ENCODE measurements at regions of chr12 and their contacts with region 1.

Region 1: GRCh38 chr12:48618541-48618940 is 48.7 kb upstream of the LALBA start:
- DNase-seq: peak; percentile 26
- H3K4me3 ChIP-seq: no peak overlapping the region
- H3K27ac ChIP-seq: no peak overlapping the region
- H3K27me3 ChIP-seq: peaks cover 5% of the 10 kb centered on the region
- CTCF ChIP-seq: peak; percentile 99

Region 2: GRCh38 chr12:48197971-48198671 is 420.4 kb before region 1 on chr12:
- CTCF ChIA-PET with region 1: interaction called, 29 read pairs
- POLR2A ChIA-PET with region 1: no interaction called
- DNase-seq: peak; percentile 65
- H3K4me3 ChIP-seq: peak overlapping the region; percentile 75
- H3K27ac ChIP-seq: peak overlapping the region; percentile 63
- H3K27me3 ChIP-seq: peaks cover 9% of the 10 kb centered on the region
- CTCF ChIP-seq: 0 out of 2 replicates have a peak, but pooled peaks have one; percentile 14

Region 3: DNA sequence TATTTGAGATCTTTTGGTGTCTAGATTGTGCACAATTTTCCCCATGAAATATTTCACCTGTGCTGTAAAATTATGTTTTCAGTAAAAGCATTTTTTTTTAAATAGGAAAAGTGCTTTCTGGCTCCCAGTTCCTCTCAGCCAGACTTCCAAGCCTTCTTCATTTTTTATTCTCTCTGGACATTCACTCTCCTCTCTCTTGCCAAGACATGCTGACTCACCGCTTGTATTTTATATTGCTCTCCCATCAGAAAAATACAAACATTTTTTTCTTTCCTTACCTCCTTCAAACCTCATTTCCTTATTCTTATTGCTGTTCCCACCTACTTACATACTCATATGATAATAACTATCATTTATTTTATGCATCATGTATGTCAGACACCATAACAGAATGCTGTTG is 230.1 kb before region 1 on chr12:
- CTCF ChIA-PET with region 1: no interaction called
- POLR2A ChIA-PET with region 1: no interaction called
- DNase-seq: no peak
- H3K4me3 ChIP-seq: no peak overlapping the region
- H3K27ac ChIP-seq: no peak overlapping the region
- H3K27me3 ChIP-seq: no peaks in the 10 kb centered on the region
- CTCF ChIP-seq: no peak

Region 4: DNA sequence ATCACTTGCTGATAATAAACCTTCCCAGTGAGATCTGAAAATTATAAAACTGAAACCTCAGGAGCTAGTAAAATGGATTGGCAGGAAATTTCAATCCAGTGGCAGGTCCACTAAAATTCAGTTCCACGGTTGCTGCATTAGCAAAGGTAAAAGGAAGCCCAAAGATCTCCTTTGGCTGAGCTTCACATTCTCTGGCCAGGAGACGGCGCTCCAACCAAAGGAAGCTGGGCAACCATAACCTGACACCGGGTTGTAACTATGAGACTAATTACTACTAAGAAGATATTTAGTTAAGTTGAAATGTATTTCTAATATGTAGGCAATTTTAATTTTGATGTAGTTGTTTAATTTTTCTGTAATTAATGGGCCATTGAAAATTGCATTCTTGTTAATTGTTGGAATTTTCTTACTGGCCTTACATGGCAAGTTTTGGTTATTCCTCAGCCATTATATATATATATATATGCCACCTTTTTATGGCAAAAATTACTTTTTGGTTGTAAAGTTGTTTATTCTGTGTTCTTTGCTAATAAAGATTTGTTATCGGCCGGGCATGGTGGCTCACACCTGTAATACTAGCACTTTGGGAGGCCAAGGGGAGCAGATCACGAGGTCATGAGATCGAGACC is 76.1 kb before region 1 on chr12:
- CTCF ChIA-PET with region 1: interaction called, 159 read pairs
- POLR2A ChIA-PET with region 1: no interaction called
- DNase-seq: no peak
- H3K4me3 ChIP-seq: no peak overlapping the region
- H3K27ac ChIP-seq: no peak overlapping the region
- H3K27me3 ChIP-seq: no peaks in the 10 kb centered on the region
- CTCF ChIP-seq: peak; percentile 80

Region 5: GRCh38 chr12:48631057-48631456 is 12.5 kb after region 1 on chr12:
- CTCF ChIA-PET with region 1: interaction called, 15 read pairs
- POLR2A ChIA-PET with region 1: no interaction called
- DNase-seq: no peak
- H3K4me3 ChIP-seq: no peak overlapping the region
- H3K27ac ChIP-seq: no peak overlapping the region
- H3K27me3 ChIP-seq: peaks cover 21% of the 10 kb centered on the region
- CTCF ChIP-seq: no peak

Region 6: DNA sequence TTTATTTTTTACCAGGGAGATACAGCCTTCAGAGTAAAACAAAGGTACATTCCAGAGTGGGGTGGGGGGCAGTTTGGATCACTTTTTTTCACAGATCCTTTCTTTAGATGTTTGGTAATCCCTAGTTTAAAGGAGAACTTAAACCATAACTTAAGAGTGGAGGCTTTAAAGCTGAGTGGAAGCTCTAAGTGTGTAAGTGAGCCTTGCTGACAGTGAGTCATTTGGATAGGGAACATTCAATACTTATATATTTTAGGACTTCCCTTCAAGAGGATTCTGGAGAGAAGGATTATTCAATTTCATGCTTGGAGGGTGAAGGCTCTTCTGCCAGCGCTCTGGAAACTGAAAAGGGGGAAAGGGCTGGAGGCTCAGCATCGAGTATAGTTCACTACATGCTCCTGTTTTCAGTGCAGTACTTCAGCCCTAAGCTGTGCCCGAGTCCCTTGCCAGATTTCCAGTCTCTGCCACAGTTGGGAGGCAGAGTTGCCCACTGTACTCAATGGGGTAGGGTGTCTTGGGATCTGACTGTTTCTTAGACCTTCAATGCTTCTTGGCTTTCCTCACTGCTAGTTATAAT is 391.6 kb after region 1 on chr12:
- CTCF ChIA-PET with region 1: no interaction called
- POLR2A ChIA-PET with region 1: no interaction called
- DNase-seq: no peak
- H3K4me3 ChIP-seq: no peak overlapping the region
- H3K27ac ChIP-seq: no peak overlapping the region
- H3K27me3 ChIP-seq: no peaks in the 10 kb centered on the region
- CTCF ChIP-seq: no peak

Region 7: DNA sequence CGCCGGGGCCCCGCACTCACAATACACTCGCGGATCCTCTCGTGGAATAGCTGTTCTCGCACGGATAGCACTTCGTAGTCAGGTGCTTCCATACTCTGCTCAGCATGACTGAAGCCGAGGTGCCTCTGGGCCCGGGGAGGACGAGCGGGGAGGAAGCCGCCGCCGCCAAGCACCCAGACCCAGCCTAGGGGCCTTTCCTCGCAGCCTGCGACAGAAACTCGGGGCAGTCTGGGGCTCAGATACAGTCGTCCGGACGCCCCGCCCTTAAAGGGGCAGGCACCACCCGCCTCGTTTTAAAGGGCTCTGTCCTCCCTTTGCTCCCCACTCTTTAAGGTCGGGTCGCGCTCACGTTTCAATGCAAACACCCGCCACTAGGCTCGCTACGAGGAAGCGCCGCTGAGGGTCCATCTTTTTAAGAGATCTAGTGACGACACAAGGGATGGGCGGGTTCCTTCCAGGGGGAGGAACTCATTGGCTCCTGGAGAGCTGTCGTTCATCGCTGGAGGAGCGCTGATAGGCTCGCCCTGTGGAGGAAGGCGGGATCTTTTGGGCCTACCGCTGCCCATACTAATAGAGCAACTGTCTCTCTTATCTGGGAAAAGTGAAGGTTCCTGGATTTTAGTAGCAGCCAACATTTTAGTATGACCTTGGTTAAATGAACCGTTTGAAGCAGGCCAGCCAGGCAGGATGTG is 492.1 kb after region 1 on chr12 and contains the start of gene LMBR1L:
- CTCF ChIA-PET with region 1: no interaction called
- POLR2A ChIA-PET with region 1: no interaction called
- DNase-seq: peak; percentile 95
- H3K4me3 ChIP-seq: peak within 1 kb of the TSS; percentile 82
- H3K27ac ChIP-seq: peak within 1 kb of the TSS; percentile 87
- H3K27me3 ChIP-seq: no peaks in the 10 kb centered on the region
- CTCF ChIP-seq: peak; percentile 59
- polyA plus RNA-seq, gene LMBR1L: 34.1 and 37.3 TPM in 2 replicates

Measured in AG04450 (cell line).